ENCODE measurements at regions of chr5 and their contacts with region 1.

Region 1: GRCh38 chr5:172266676-172267092 is 16.9 kb downstream of the UBTD2 start:
- DNase-seq: peak; percentile 36
- ATAC-seq: peak; percentile 55
- H3K4me3 ChIP-seq: no peak overlapping the region
- H3K27ac ChIP-seq: no peak overlapping the region
- H3K4me1 ChIP-seq: peaks cover 7% of the 10 kb centered on the region
- H3K27me3 ChIP-seq: no peaks in the 10 kb centered on the region
- CTCF ChIP-seq: no peak
- POLR2A ChIP-seq: no peak
- RAD21 ChIP-seq: no peak

Region 2: DNA sequence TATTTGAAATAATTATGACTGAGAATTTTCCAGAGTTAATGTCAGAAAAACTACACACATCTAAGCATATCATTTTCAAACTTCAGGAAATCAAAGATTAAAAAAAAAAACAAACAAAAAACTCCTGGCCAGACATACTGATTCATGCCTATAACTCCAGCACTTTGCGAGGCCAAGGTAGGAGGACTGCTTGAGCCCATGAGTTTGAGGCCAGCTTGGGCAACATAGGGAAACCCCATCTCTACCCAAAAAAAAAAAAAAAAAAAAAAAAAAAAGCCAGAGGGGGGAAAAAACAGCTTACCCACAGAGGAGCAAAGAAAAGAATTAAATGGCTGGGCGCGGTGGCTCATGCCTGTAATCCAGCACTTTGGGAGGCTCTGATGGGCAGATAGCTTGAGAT is 50.3 kb before region 1 on chr5:
- CTCF ChIA-PET with region 1: no interaction called
- POLR2A ChIA-PET with region 1: interaction called, 20 read pairs
- dilution Hi-C with region 1: no loop called
- in situ Hi-C with region 1: no loop called
- intact Hi-C with region 1: no loop called
- DNase-seq: peak; percentile 11
- ATAC-seq: no peak
- H3K4me3 ChIP-seq: no peak overlapping the region
- H3K27ac ChIP-seq: no peak overlapping the region
- H3K4me1 ChIP-seq: peaks cover 1% of the 10 kb centered on the region; the same call in 1 of the 2 replicates
- H3K27me3 ChIP-seq: no peaks in the 10 kb centered on the region
- CTCF ChIP-seq: no peak
- POLR2A ChIP-seq: no peak
- RAD21 ChIP-seq: no peak

Region 3: GRCh38 chr5:172243302-172243701 is 23.4 kb before region 1 on chr5:
- CTCF ChIA-PET with region 1: no interaction called
- POLR2A ChIA-PET with region 1: interaction called, 22 read pairs
- dilution Hi-C with region 1: no loop called
- in situ Hi-C with region 1: no loop called
- intact Hi-C with region 1: no loop called
- DNase-seq: no peak
- ATAC-seq: no peak
- H3K4me3 ChIP-seq: no peak overlapping the region
- H3K27ac ChIP-seq: no peak overlapping the region
- H3K4me1 ChIP-seq: peaks cover 1% of the 10 kb centered on the region; the same call in 1 of the 2 replicates
- H3K27me3 ChIP-seq: no peaks in the 10 kb centered on the region
- CTCF ChIP-seq: no peak
- POLR2A ChIP-seq: no peak
- RAD21 ChIP-seq: no peak

Region 4: DNA sequence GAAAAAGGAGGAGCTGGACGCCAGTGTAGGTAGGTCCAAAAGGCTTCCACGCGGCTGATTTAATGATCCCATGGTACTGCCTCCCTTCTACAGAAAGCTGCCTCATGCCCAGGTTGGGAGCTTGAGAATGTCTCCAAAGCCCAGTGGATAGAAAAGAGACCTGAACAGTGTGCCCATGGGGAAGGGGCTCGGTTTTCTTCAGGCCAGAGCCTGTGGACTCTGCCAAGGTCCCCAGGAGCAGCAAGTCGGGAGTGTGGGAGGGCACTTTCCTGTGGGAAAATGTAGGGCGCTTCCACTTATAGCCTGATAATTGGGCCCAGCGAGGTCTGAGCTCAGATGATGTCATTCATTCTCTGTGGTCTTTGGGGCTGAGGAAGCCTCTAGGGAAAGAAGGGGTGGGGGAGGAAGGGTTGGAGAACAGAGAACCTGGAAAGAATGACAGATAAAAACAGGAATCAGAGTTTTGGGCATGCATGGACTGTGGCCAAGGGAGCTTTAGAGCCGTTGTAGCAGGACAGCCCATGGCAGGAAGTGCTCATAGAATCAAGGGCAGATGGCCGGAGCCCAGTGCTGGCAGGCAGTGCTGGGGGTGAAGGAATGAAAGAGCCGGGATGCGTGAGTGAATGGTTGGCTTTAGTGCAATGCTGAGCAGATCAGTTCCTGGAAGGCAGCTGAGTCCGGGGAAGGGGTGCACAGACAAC is 230.1 kb after region 1 on chr5:
- CTCF ChIA-PET with region 1: no interaction called
- POLR2A ChIA-PET with region 1: no interaction called
- dilution Hi-C with region 1: no loop called
- in situ Hi-C with region 1: no loop called
- intact Hi-C with region 1: no loop called
- DNase-seq: no peak
- ATAC-seq: no peak
- H3K4me3 ChIP-seq: no peak overlapping the region
- H3K27ac ChIP-seq: no peak overlapping the region
- H3K4me1 ChIP-seq: no peaks in the 10 kb centered on the region
- H3K27me3 ChIP-seq: peaks cover 62% of the 10 kb centered on the region
- CTCF ChIP-seq: no peak
- POLR2A ChIP-seq: no peak
- RAD21 ChIP-seq: no peak